Heart left ventricle (tissue), 16 donors: ENCODE measurements at regions of chr4 and their contacts with region 1.

Region 1: GRCh38 chr4:15963001-15963451 is at the start of gene FGFBP2:
- DNase-seq: peak; percentile 20 to 60 (median 37)
- ATAC-seq: peak in 3 of 4 donors; percentile 72 to 83 (median 81)
- H3K4me3 ChIP-seq: peak within 1 kb of the TSS in 1 of 12 donors; percentile 8
- H3K27ac ChIP-seq: no peak within 1 kb of the TSS
- H3K4me1 ChIP-seq: peaks cover 0 to 13% (median 2%) of the 10 kb centered on the region in 12 donors
- H3K27me3 ChIP-seq: no peaks in the 10 kb centered on the region
- CTCF ChIP-seq: peak in 11 of 12 donors; percentile 14 to 50 (median 33)
- POLR2A ChIP-seq: no peak
- total RNA-seq, gene FGFBP2: 0.88 to 15.6 (median 1.6) TPM

Region 2: DNA sequence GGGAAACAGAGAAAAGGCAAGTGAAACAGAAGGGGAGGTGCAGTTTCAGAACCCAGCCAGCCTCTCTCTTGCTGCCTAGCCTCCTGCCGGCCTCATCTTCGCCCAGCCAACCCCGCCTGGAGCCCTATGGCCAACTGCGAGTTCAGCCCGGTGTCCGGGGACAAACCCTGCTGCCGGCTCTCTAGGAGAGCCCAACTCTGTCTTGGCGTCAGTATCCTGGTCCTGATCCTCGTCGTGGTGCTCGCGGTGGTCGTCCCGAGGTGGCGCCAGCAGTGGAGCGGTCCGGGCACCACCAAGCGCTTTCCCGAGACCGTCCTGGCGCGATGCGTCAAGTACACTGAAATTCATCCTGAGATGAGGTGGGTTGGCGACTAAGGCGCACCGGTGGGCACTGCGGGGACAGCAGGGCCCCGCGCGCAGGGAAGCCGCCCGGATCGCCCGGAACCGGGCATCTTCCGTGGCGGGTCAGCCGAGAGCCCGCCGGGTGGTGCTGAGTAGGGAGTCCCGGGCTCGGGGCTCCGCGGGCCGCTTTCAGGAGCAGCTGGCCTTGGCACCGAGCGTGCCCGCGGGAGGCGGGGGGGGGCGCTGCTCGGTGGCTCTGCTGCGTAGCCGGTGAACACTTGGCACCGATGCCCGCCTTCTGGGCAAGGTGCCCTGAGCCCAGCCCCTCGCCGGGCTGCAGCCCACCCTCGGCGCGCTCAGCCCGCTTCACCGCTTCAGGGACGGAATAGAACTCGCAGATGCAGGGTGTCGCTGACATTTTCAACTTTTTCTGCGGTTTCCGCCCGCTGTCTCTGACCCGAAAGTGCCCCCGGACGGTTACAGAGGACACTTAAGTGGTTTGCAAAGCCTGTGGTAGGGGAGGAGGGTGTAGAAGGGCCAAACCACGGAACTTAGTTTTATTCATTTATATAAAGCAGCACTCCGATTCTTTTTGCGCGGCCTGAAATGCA is 184.5 kb before region 1 on chr4 and contains the start of gene CD38:
- intact Hi-C with region 1: no loop called
- DNase-seq: peak; percentile 25 to 79 (median 46)
- ATAC-seq: peak in 3 of 4 donors; percentile 66 to 80 (median 78)
- H3K4me3 ChIP-seq: peak within 1 kb of the TSS; percentile 54 to 90 (median 62)
- H3K27ac ChIP-seq: peak within 1 kb of the TSS; percentile 17 to 79 (median 62)
- H3K4me1 ChIP-seq: peaks cover 0 to 40% (median 7%) of the 10 kb centered on the region in 12 donors
- H3K27me3 ChIP-seq: no peaks in the 10 kb centered on the region
- CTCF ChIP-seq: no peak
- POLR2A ChIP-seq: no peak
- total RNA-seq, gene CD38: 1.0 to 12.4 (median 3.0) TPM

Region 3: GRCh38 chr4:16001484-16001858 is 38.4 kb after region 1 on chr4:
- intact Hi-C with region 1: loop called in 3 of 10 experiments (anchors 2 to 5 kb)
- DNase-seq: peak in 4 of 5 donors; percentile 45 to 64 (median 60)
- ATAC-seq: peak; percentile 70 to 97 (median 92)
- H3K4me3 ChIP-seq: no peak overlapping the region
- H3K27ac ChIP-seq: no peak overlapping the region
- H3K4me1 ChIP-seq: peaks cover 0 to 13% (median 0%) of the 10 kb centered on the region in 12 donors
- H3K27me3 ChIP-seq: no peaks in the 10 kb centered on the region
- CTCF ChIP-seq: peak; percentile 75 to 89 (median 82)
- POLR2A ChIP-seq: no peak